Caco-2 (cell line): ENCODE measurements at regions of chr11 and their contacts with region 1.

Region 1: DNA sequence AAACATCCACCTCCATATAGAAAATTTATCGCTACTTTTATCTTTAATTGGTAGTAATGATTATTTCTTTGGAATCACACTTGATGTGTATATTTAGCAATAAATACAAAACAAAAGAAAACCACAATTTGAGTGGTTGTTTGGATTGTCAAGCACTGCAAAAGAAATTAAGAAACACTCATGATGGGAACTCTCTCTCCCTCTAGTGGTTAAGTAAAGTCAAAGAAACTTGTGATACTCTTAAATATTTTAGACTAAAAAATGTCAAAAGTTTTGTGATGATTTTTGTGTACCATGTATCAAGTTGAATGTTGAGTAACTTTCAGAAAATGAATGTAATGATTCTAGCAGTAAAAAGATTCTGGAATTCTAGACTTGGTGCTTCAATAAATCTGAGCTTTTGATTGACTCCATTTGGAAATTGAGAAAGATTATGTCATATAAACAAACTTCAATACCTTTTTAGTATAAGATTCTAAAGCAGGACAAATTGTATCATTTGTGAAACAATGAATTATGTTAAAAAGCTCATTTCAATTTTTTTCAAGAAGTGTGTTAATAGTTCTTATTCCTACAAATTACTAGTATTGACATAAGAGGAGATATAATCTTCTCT is 20.8 kb downstream of the MUC15 start:
- DNase-seq: no peak
- H3K4me3 ChIP-seq: no peak overlapping the region
- H3K4me3 Mint-ChIP-seq: no peak overlapping the region
- H3K27ac Mint-ChIP-seq: no peak overlapping the region
- H3K4me1 ChIP-seq: no peaks in the 10 kb centered on the region
- H3K4me1 Mint-ChIP-seq: no peaks in the 10 kb centered on the region
- H3K27me3 ChIP-seq: no peaks in the 10 kb centered on the region
- H3K27me3 Mint-ChIP-seq: peaks cover 5% of the 10 kb centered on the region
- CTCF ChIP-seq: peak; percentile 31 to 43

Region 2: GRCh38 chr11:26297189-26297975 is 253.9 kb before region 1 on chr11:
- CTCF ChIA-PET with region 1: no interaction called
- POLR2A ChIA-PET with region 1: no interaction called
- intact Hi-C with region 1: loop called (anchors 1 kb)
- DNase-seq: peak in 1 of 2 experiments; percentile 36
- H3K4me3 ChIP-seq: no peak overlapping the region
- H3K4me3 Mint-ChIP-seq: no peak overlapping the region
- H3K27ac Mint-ChIP-seq: no peak overlapping the region
- H3K4me1 ChIP-seq: no peaks in the 10 kb centered on the region
- H3K4me1 Mint-ChIP-seq: no peaks in the 10 kb centered on the region
- H3K27me3 ChIP-seq: no peaks in the 10 kb centered on the region
- H3K27me3 Mint-ChIP-seq: peaks cover 2% of the 10 kb centered on the region
- CTCF ChIP-seq: peak; percentile 36 to 62

Region 3: DNA sequence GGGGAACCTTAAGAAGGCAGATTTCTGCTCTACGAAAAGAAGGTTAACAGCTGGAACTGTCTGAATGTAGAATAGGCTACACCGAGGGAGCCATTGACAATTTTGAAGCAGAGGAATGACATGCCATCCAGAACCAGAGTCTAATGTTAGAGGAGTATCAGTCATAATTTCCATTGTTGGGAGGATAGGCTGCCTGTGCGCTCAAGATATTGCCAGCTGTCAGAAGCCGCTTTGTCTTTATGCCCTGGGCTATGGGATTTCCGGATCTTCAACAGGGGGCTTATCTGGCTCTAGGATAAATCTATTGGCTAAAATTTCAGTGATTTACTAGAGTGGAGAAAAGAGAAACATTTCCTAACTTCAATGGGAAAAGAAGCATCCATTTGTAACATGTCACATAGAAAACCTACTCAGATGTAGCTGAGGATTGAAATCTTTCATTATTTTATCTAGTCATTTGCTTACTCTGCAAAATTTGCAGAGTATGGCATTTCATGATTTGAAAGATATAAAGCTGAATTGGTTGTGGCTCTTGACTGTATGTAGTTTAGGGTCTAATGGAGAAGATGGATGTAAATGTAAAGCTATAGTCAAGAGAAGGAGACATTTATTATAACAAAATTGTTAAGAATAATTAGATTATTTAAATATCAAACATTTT is 140.5 kb before region 1 on chr11:
- CTCF ChIA-PET with region 1: no interaction called
- POLR2A ChIA-PET with region 1: no interaction called
- intact Hi-C with region 1: no loop called
- DNase-seq: no peak
- H3K4me3 ChIP-seq: no peak overlapping the region
- H3K4me3 Mint-ChIP-seq: no peak overlapping the region
- H3K27ac Mint-ChIP-seq: no peak overlapping the region
- H3K4me1 ChIP-seq: no peaks in the 10 kb centered on the region
- H3K4me1 Mint-ChIP-seq: no peaks in the 10 kb centered on the region
- H3K27me3 ChIP-seq: no peaks in the 10 kb centered on the region
- H3K27me3 Mint-ChIP-seq: no peaks in the 10 kb centered on the region
- CTCF ChIP-seq: no peak

Region 4: GRCh38 chr11:26677566-26677965 is 126.3 kb after region 1 on chr11:
- CTCF ChIA-PET with region 1: no interaction called
- POLR2A ChIA-PET with region 1: no interaction called
- intact Hi-C with region 1: no loop called
- DNase-seq: no peak
- H3K4me3 ChIP-seq: no peak overlapping the region
- H3K4me3 Mint-ChIP-seq: no peak overlapping the region
- H3K27ac Mint-ChIP-seq: no peak overlapping the region
- H3K4me1 ChIP-seq: no peaks in the 10 kb centered on the region
- H3K4me1 Mint-ChIP-seq: no peaks in the 10 kb centered on the region
- H3K27me3 ChIP-seq: no peaks in the 10 kb centered on the region
- H3K27me3 Mint-ChIP-seq: peaks cover 2% of the 10 kb centered on the region
- CTCF ChIP-seq: no peak